Sigmoid colon (tissue), 7 donors: ENCODE measurements at regions of chr6 and their contacts with region 1.

Region 1: GRCh38 chr6:34223956-34224940 is 12.4 kb upstream of the HMGA1 start:
- DNase-seq: peak; percentile 96
- H3K4me3 ChIP-seq: peak overlapping the region; percentile 57 to 79 (median 67)
- H3K27ac ChIP-seq: peak overlapping the region; percentile 90 to 98 (median 94)
- H3K4me1 ChIP-seq: peaks cover 0 to 15% (median 13%) of the 10 kb centered on the region in 4 donors
- H3K27me3 ChIP-seq: no peaks in the 10 kb centered on the region
- CTCF ChIP-seq: no peak
- EP300 ChIP-seq: peak in 1 of 4 donors; percentile 35
- POLR2A ChIP-seq: peak; percentile 16 to 51

Region 2: DNA sequence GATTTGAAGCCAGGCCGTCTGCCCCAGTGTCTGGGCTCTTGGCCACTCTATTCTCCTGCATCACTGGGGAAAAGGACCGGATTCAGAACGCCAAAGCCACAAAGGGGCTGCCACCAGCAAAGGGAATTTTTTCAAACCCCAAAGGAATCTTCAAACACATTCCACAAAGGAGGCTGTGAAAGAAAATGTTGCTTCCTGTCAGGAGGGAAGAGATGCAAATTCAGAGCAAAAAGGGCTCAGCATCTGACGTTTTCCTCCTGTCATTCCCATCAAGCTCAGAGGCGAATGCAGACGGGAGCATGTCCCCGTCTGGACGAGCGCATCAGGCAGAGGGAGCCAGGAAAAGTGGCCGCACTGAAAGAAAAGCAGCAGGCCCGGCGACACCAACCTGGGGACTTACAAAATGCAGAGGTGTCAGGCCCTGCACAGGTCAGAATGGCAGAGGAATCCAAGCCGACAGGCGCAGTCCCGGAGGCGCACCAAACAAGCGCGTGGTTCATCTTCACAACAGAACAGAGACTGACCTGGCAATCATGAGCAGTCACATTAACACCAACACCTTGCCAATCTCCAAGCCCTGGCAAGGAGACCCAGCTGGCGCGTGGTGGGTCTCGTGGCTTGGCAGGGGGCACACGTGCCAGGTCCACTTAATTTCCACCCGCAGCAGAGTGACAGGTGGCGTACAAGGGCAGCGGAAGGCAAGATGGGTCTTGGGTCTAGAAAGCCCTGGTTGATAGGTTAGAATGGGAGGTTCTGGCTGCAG is 141.2 kb before region 1 on chr6:
- intact Hi-C with region 1: no loop called
- DNase-seq: no peak
- H3K4me3 ChIP-seq: no peak overlapping the region
- H3K27ac ChIP-seq: no peak overlapping the region
- H3K4me1 ChIP-seq: no peaks in the 10 kb centered on the region
- H3K27me3 ChIP-seq: no peaks in the 10 kb centered on the region
- CTCF ChIP-seq: no peak
- EP300 ChIP-seq: no peak
- POLR2A ChIP-seq: no peak

Region 3: GRCh38 chr6:34236131-34236996 is 12.1 kb after region 1 on chr6 and contains the start of gene HMGA1:
- intact Hi-C with region 1: loop called (anchors 1 kb)
- DNase-seq: peak; percentile 95
- H3K4me3 ChIP-seq: peak within 1 kb of the TSS; percentile 65 to 81 (median 72)
- H3K27ac ChIP-seq: peak within 1 kb of the TSS; percentile 88 to 95 (median 93)
- H3K4me1 ChIP-seq: peaks cover 0 to 27% (median 18%) of the 10 kb centered on the region in 4 donors
- H3K27me3 ChIP-seq: no peaks in the 10 kb centered on the region
- CTCF ChIP-seq: no peak
- EP300 ChIP-seq: no peak
- POLR2A ChIP-seq: peak; percentile 39 to 82
- total RNA-seq, gene HMGA1: 6.9 to 12.1 (median 9.4) TPM